ENCODE measurements at regions of chr17 and their contacts with region 1.

Region 1: GRCh38 chr17:39153599-39154051 is 2.2 kb upstream of the PLXDC1 start:
- DNase-seq: peak; percentile 91 to 98 (median 94)
- H3K4me3 ChIP-seq: peak overlapping the region; percentile 64 to 97 (median 83)
- H3K27ac ChIP-seq: peak overlapping the region; percentile 67 to 97 (median 92)
- H3K27me3 ChIP-seq: no peaks in the 10 kb centered on the region
- CTCF ChIP-seq: peak in 47 of 56 donors; percentile 11 to 55 (median 32)

Region 2: DNA sequence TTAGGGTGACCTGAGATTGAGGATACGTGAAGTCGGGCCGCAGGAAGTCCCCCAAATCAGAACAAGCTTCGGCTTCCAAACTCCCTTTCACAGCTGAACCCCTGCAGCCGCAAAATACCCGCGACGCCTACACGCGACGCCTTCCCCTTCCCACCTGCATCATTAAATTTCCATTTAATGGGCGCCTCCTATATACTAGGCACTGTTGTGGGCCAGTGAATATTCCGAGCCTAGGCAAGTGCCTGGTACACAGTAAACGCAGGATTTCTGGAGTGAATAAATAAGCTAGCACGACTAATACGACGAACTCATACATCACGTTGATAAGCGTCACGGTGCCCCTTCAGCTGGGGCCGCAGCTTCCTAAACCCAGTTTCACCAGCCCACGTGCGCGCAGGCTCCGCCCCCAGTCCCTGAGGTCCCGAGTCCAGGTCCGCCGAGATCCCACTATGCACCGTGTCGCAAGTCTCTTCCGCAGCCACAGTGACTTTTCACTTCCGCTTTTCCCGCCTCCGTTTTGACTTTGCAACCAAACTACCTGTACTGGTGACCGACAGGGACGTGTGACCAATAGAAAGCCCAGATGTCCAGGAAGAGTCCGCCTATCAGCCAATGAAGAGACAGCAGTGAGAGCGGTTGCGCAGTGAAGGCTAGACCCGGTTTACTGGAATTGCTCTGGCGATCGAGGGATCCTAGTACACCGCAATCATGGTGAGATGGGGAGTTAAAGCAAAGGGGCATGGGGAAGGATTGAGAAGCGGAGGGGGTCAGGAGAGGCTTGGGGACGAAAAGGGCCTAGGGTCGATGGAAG is 401.3 kb before region 1 on chr17 and contains the start of gene PSMB3:
- intact Hi-C with region 1: loop called in 1 of 2 experiments (anchors 5 kb)
- DNase-seq: peak; percentile 95 to 100 (median 99)
- H3K4me3 ChIP-seq: peak within 1 kb of the TSS; percentile 74 to 100 (median 96)
- H3K27ac ChIP-seq: peak within 1 kb of the TSS in 58 of 59 donors; percentile 20 to 96 (median 88)
- H3K27me3 ChIP-seq: no peaks in the 10 kb centered on the region
- CTCF ChIP-seq: peak in 15 of 56 donors; percentile 4 to 46 (median 20)
- total RNA-seq, gene PSMB3: 55.5 to 145 (median 107) TPM

Region 3: GRCh38 chr17:38868817-38869525 is 284.7 kb before region 1 on chr17:
- intact Hi-C with region 1: loop called (anchors 5 kb)
- DNase-seq: peak; percentile 85 to 96 (median 92)
- H3K4me3 ChIP-seq: peak overlapping the region; percentile 66 to 99 (median 96)
- H3K27ac ChIP-seq: peak overlapping the region; percentile 86 to 100 (median 99)
- H3K27me3 ChIP-seq: no peaks in the 10 kb centered on the region
- CTCF ChIP-seq: peak in 30 of 56 donors; percentile 9 to 57 (median 24)

Region 4: DNA sequence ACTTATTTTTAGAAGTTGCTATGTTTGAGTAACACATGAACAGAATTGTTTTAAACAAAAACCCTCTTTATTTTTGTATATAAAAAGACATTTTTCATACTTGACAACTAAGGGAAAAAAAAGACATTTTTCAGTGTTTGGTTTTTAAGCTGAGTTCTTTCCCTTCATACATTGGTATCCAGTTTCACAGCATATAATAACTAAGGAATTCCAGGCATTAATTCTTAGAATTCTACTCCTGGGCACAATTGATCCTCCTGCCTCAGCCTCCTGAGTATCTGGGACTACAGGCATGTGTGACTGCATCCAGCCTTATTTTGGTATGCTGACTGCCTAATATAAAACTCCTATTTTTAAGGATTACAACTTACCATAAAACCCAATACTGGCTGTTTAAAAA is 194.9 kb before region 1 on chr17:
- intact Hi-C with region 1: no loop called
- DNase-seq: no peak
- H3K4me3 ChIP-seq: no peak overlapping the region
- H3K27ac ChIP-seq: no peak overlapping the region
- H3K27me3 ChIP-seq: no peaks in the 10 kb centered on the region
- CTCF ChIP-seq: no peak

Region 5: GRCh38 chr17:38982858-38983746 is 170.5 kb before region 1 on chr17:
- intact Hi-C with region 1: loop called (anchors 2 kb)
- DNase-seq: peak in 2 of 10 donors; percentile 48 to 57
- H3K4me3 ChIP-seq: peak overlapping the region in 1 of 59 donors; percentile 5
- H3K27ac ChIP-seq: peak overlapping the region in 2 of 59 donors; percentile 20 to 40
- H3K27me3 ChIP-seq: no peaks in the 10 kb centered on the region
- CTCF ChIP-seq: peak; percentile 50 to 87 (median 80)

Region 6: DNA sequence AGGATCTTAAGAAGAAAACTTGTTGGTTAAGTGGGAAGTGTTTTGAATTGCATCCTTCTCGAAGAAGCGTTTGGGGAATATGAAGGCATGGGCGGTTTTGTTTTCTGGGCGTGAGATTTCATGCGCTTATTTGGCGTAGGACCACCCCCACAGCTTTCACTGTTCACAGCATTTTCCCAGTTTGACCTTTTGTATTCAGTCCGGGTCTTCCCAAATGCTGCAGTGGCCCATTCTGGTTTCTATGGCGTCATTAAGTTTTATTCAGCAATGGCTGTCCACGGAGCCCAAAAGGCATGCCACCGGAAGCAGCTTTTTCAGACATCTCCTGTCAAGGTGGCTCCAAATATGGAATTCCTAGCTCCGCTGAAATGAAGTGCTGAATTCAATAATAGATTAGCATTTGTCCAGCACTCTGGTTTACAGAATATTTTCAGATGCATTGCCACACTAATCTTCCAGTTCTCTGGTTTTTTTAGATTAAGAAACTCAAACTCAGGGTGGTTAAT is 95.9 kb before region 1 on chr17:
- intact Hi-C with region 1: loop called in 1 of 2 experiments (anchors 2 kb)
- DNase-seq: peak in 1 of 10 donors; percentile 20
- H3K4me3 ChIP-seq: peak overlapping the region in 56 of 59 donors; percentile 30 to 83 (median 68)
- H3K27ac ChIP-seq: peak overlapping the region in 35 of 59 donors; percentile 14 to 86 (median 62)
- H3K27me3 ChIP-seq: no peaks in the 10 kb centered on the region
- CTCF ChIP-seq: no peak

Region 7: DNA sequence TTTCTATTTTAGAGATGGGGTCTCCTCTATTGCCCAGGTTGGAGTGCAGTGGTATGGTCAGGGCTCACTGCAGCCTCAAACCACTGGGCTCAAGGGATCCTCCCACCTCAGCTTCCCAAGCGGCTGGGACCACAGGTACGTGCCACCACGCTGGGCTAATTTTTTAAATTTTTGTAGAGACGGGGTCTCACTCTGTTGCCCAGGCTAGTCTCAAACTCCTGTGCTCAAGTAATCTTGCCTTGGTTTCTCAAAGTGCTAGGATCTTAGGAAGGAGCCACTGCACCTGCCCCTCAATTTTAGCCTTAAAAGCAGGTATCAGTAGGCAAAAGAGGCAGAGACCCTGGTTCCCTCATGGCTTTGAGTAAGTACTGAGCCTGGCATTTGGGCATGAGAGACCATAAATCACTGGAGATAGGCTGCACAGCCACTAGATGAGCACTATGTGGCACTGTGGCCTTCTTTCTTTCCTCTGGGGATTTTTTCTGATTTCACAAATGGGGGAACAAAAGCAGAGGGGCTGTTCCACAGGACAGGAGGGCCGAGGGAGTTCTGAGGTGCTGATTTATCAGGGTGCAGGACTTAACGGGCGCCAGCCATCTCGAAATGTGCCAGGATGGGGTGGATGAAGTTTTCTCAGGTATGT is 84.4 kb before region 1 on chr17:
- intact Hi-C with region 1: loop called in 1 of 2 experiments (anchors 5 kb)
- DNase-seq: peak in 1 of 10 donors; percentile 26
- H3K4me3 ChIP-seq: no peak overlapping the region
- H3K27ac ChIP-seq: peak overlapping the region in 1 of 59 donors; percentile 12
- H3K27me3 ChIP-seq: no peaks in the 10 kb centered on the region
- CTCF ChIP-seq: peak in 55 of 56 donors; percentile 30 to 72 (median 59)

Region 8: GRCh38 chr17:39174907-39175694 is 21.5 kb after region 1 on chr17:
- intact Hi-C with region 1: no loop called
- DNase-seq: peak in 9 of 10 donors; percentile 60 to 79 (median 70)
- H3K4me3 ChIP-seq: peak overlapping the region in 8 of 59 donors; percentile 16 to 39 (median 21)
- H3K27ac ChIP-seq: peak overlapping the region in 9 of 59 donors; percentile 14 to 42 (median 28)
- H3K27me3 ChIP-seq: no peaks in the 10 kb centered on the region
- CTCF ChIP-seq: peak; percentile 67 to 95 (median 85)

Region 9: GRCh38 chr17:39186481-39187002 is 32.9 kb after region 1 on chr17:
- intact Hi-C with region 1: no loop called
- DNase-seq: no peak
- H3K4me3 ChIP-seq: no peak overlapping the region
- H3K27ac ChIP-seq: peak overlapping the region in 43 of 59 donors; percentile 3 to 72 (median 44)
- H3K27me3 ChIP-seq: no peaks in the 10 kb centered on the region
- CTCF ChIP-seq: no peak

Region 10: GRCh38 chr17:39199820-39200069 is 46.1 kb after region 1 on chr17:
- intact Hi-C with region 1: loop called (anchors 2 to 5 kb)
- DNase-seq: peak; percentile 75 to 90 (median 82)
- H3K4me3 ChIP-seq: peak overlapping the region; percentile 43 to 100 (median 96)
- H3K27ac ChIP-seq: peak overlapping the region; percentile 93 to 100 (median 99)
- H3K27me3 ChIP-seq: no peaks in the 10 kb centered on the region
- CTCF ChIP-seq: peak in 3 of 56 donors; percentile 10 to 11 (median 10)

Measured in dorsolateral prefrontal cortex (tissue), 120 donors.